ENCODE measurements at regions of chr6 and their contacts with region 1.

Region 1: DNA sequence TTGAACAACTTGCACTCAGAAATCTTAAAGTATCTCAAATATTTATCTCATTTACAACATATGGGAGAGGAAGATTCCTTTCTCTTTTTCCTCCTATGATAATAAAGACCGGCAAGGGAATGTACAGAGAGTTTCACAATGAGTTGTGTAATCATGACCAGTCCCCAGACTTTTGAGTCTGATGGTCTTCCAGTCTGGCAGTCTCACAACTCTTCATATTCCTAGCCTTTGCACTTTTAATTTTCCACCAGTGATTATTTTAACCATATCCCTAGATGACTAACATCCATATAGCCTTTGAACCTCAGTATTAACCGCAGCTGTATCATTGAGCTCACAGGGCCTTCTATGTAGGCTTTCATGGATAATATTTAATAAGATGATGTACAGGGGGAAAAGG is 278.5 kb downstream of the KHDC1L start:
- DNase-seq: no peak

Region 2: DNA sequence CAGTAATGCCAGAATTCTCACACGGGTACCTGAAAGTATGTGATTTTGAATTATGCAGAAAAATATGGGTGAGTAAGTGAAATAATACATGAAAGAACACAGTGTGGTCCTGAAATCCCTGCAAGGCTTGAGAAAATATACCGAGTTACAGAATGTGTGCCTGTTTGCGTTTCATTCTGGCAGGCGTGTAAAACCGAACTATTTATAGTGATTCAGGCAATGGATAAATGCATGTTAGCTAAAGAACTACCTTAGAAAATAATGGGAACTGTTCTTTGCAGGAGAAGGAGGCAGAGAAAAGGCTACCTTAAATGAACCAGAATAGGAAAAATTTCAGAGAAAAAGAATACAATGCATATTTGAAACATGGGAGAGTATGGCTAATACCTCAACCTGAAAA is 470.7 kb before region 1 on chr6:
- intact Hi-C with region 1: no loop called
- DNase-seq: no peak

Region 3: GRCh38 chr6:72857791-72858585 is 88.8 kb before region 1 on chr6:
- intact Hi-C with region 1: loop called in 1 of 2 experiments (anchors 10 kb)
- DNase-seq: no peak